Mammary epithelial cell (primary cell): ENCODE measurements at regions of chr6 and their contacts with region 1.

Region 1: DNA sequence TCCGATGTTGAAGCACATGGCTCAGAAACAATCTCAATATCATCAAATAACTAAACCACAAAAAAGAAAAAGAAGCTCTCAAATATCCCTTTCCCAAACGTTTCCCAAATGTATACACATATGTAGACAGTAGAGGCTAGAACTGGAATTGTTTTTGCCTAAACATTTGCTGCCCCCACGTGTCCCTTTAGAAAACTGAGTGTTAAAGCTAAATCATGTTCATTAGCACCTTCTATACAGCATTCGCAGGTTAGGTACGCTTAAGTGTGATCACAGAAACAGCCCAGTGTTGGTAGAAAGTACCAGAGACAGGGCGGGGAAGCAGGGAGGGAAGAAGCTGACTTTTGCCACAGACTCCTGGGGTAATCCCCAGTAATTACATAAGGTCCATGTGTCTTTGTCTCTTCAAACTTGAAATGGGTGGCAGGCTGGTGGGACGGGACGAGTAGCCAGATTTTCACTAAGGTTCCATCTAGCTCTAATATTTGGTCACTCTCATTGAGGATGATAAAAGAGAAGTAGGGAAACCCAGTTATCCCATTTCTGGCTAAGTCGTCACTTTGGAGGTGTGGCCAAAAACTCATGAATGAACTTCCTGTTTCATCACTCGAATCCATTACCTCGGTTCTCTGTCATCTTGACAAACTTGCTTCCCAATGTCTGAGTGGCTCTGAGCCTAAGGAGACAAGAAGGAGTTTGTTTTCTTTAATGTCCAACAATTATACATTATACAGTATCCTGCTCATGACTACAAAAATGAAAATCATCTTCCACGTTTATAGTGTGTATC is 15.0 kb upstream of the TFAP2A start:
- DNase-seq: peak; percentile 74
- H3K4me3 ChIP-seq: no peak overlapping the region
- H3K27ac ChIP-seq: peak overlapping the region; percentile 98
- H3K4me1 ChIP-seq: peaks cover 80% of the 10 kb centered on the region
- H3K27me3 ChIP-seq: no peaks in the 10 kb centered on the region
- CTCF ChIP-seq: peak; percentile 49 to 69

Region 2: GRCh38 chr6:8539446-8539845 is 1890.4 kb before region 1 on chr6:
- CTCF ChIA-PET with region 1: no interaction called
- dilution Hi-C with region 1: no loop called
- in situ Hi-C with region 1: loop called (anchors 25 kb)
- intact Hi-C with region 1: no loop called
- DNase-seq: peak; percentile 33
- H3K4me3 ChIP-seq: no peak overlapping the region
- H3K27ac ChIP-seq: no peak overlapping the region
- H3K4me1 ChIP-seq: no peaks in the 10 kb centered on the region
- H3K27me3 ChIP-seq: no peaks in the 10 kb centered on the region
- CTCF ChIP-seq: peak; percentile 24 to 51

Region 3: GRCh38 chr6:8983188-8983688 is 1446.6 kb before region 1 on chr6:
- CTCF ChIA-PET with region 1: no interaction called
- dilution Hi-C with region 1: no loop called
- in situ Hi-C with region 1: loop called (anchors 10 to 25 kb)
- intact Hi-C with region 1: loop called (anchors 2 kb)
- DNase-seq: peak; percentile 47
- H3K4me3 ChIP-seq: no peak overlapping the region
- H3K27ac ChIP-seq: no peak overlapping the region
- H3K4me1 ChIP-seq: no peaks in the 10 kb centered on the region
- H3K27me3 ChIP-seq: no peaks in the 10 kb centered on the region
- CTCF ChIP-seq: peak; percentile 96 to 97

Region 4: GRCh38 chr6:9240861-9241260 is 1189.0 kb before region 1 on chr6:
- CTCF ChIA-PET with region 1: no interaction called
- dilution Hi-C with region 1: no loop called
- in situ Hi-C with region 1: no loop called
- intact Hi-C with region 1: no loop called
- DNase-seq: no peak
- H3K4me3 ChIP-seq: no peak overlapping the region
- H3K27ac ChIP-seq: no peak overlapping the region
- H3K4me1 ChIP-seq: no peaks in the 10 kb centered on the region
- H3K27me3 ChIP-seq: no peaks in the 10 kb centered on the region
- CTCF ChIP-seq: no peak

Region 5: GRCh38 chr6:9412951-9413559 is 1016.8 kb before region 1 on chr6:
- CTCF ChIA-PET with region 1: no interaction called
- dilution Hi-C with region 1: no loop called
- in situ Hi-C with region 1: loop called in 1 of 2 experiments (anchors 25 kb)
- intact Hi-C with region 1: loop called (anchors 5 kb)
- DNase-seq: peak; percentile 19
- H3K4me3 ChIP-seq: no peak overlapping the region
- H3K27ac ChIP-seq: no peak overlapping the region
- H3K4me1 ChIP-seq: no peaks in the 10 kb centered on the region
- H3K27me3 ChIP-seq: no peaks in the 10 kb centered on the region
- CTCF ChIP-seq: peak; percentile 69 to 72

Region 6: GRCh38 chr6:10082385-10082784 is 347.4 kb before region 1 on chr6:
- CTCF ChIA-PET with region 1: interaction called, 10 read pairs
- dilution Hi-C with region 1: no loop called
- in situ Hi-C with region 1: no loop called
- intact Hi-C with region 1: loop called (anchors 1 kb)
- DNase-seq: peak; percentile 71
- H3K4me3 ChIP-seq: no peak overlapping the region
- H3K27ac ChIP-seq: no peak overlapping the region
- H3K4me1 ChIP-seq: peaks cover 37% of the 10 kb centered on the region
- H3K27me3 ChIP-seq: no peaks in the 10 kb centered on the region
- CTCF ChIP-seq: no peak

Region 7: GRCh38 chr6:10395171-10395941 is 34.5 kb before region 1 on chr6:
- CTCF ChIA-PET with region 1: no interaction called
- dilution Hi-C with region 1: no loop called
- in situ Hi-C with region 1: no loop called
- intact Hi-C with region 1: no loop called
- DNase-seq: peak; percentile 65
- H3K4me3 ChIP-seq: no peak overlapping the region
- H3K27ac ChIP-seq: no peak overlapping the region
- H3K4me1 ChIP-seq: peaks cover 17% of the 10 kb centered on the region
- H3K27me3 ChIP-seq: no peaks in the 10 kb centered on the region
- CTCF ChIP-seq: no peak

Region 8: DNA sequence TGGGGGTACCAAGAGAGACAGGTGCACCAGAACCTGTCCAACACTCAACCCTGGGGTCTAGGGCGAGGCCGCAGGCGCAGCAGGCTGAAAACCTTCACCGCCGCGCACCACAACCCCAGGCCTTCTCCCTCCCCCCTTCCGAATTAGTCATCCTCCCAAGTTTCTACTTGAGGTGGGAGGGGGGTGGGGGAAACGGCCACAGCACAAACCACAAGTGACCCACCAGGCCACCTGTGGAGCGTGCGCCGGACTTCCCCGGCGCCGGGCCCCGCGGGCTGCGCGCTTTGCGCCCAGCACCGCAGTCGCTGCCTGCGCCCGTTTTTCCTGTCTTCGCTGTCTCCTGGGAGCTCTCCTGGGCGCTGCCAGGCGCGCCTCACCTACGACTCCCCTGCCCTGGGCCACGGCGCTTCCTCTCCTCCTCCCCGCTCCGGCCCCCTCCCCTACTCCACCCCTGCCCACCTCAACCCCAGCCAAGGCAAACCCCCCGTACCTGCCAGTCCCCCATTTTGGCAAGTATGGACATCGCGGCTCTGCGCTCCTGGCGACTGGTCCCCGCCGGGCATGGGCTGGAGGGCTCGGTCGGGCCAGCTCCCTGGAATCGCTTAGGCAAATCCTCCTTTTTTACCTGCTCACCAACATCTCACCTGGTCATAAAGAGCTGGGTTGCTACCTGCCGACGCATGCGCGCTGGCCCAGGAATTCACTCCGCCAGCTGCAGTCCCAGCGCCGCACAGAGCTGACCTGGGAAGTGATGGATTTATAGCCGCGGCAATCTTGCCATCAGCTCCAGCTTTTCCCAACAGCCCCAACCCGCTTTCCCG is 10.7 kb before region 1 on chr6:
- CTCF ChIA-PET with region 1: interaction called, 5 read pairs
- dilution Hi-C with region 1: no loop called
- in situ Hi-C with region 1: no loop called
- intact Hi-C with region 1: loop called (anchors 1 kb)
- DNase-seq: peak; percentile 95
- H3K4me3 ChIP-seq: peak overlapping the region; percentile 53 to 96 (median 84)
- H3K27ac ChIP-seq: peak overlapping the region; percentile 99
- H3K4me1 ChIP-seq: peaks cover 29% of the 10 kb centered on the region
- H3K27me3 ChIP-seq: no peaks in the 10 kb centered on the region
- CTCF ChIP-seq: no peak